Caco-2 (cell line): ENCODE measurements at regions of chr2 and their contacts with region 1.

Region 1: GRCh38 chr2:10497797-10498251 is 49.7 kb upstream of the ODC1 start:
- DNase-seq: peak; percentile 68 to 72
- H3K4me3 ChIP-seq: no peak overlapping the region
- H3K4me3 Mint-ChIP-seq: no peak overlapping the region
- H3K27ac Mint-ChIP-seq: no peak overlapping the region
- H3K4me1 ChIP-seq: 0 out of 2 replicates have a peak, but pooled peaks cover 9% of the 10 kb centered on the region
- H3K4me1 Mint-ChIP-seq: peaks cover 15% of the 10 kb centered on the region
- H3K27me3 ChIP-seq: no peaks in the 10 kb centered on the region
- H3K27me3 Mint-ChIP-seq: no peaks in the 10 kb centered on the region
- CTCF ChIP-seq: no peak

Region 2: DNA sequence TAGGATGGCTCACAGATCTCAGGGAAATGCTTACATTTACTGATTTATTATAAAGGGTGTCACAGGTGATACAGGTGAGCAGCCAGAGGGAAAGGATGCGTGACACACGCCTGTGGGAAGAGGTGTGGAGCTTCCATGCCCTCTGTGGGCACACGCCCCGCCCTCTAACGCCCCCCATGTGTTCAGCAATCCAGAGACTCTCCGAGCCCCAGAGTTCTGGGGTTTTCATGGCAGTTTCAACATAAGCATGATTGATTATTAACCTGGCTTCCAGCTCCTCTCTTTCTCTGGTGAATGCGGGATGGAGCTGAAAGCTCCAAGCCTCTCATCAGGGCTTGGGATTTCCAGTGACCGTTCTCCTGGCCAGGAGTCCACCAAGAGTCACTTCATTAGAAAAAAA is 15.4 kb before region 1 on chr2:
- CTCF ChIA-PET with region 1: no interaction called
- POLR2A ChIA-PET with region 1: no interaction called
- intact Hi-C with region 1: loop called (anchors 2 kb)
- DNase-seq: peak; percentile 43 to 64
- H3K4me3 ChIP-seq: no peak overlapping the region
- H3K4me3 Mint-ChIP-seq: peak overlapping the region; percentile 61
- H3K27ac Mint-ChIP-seq: peak overlapping the region; percentile 68
- H3K4me1 ChIP-seq: peaks cover 34% of the 10 kb centered on the region
- H3K4me1 Mint-ChIP-seq: peaks cover 18% of the 10 kb centered on the region
- H3K27me3 ChIP-seq: no peaks in the 10 kb centered on the region
- H3K27me3 Mint-ChIP-seq: no peaks in the 10 kb centered on the region
- CTCF ChIP-seq: no peak

Region 3: GRCh38 chr2:10700078-10700803 is 202.4 kb after region 1 on chr2:
- CTCF ChIA-PET with region 1: no interaction called
- POLR2A ChIA-PET with region 1: no interaction called
- intact Hi-C with region 1: no loop called
- DNase-seq: no peak
- H3K4me3 ChIP-seq: no peak overlapping the region
- H3K4me3 Mint-ChIP-seq: no peak overlapping the region
- H3K27ac Mint-ChIP-seq: no peak overlapping the region
- H3K4me1 ChIP-seq: no peaks in the 10 kb centered on the region
- H3K4me1 Mint-ChIP-seq: no peaks in the 10 kb centered on the region
- H3K27me3 ChIP-seq: no peaks in the 10 kb centered on the region
- H3K27me3 Mint-ChIP-seq: peaks cover 3% of the 10 kb centered on the region
- CTCF ChIP-seq: no peak